ENCODE measurements at regions of chr2 and their contacts with region 1.

Region 1: DNA sequence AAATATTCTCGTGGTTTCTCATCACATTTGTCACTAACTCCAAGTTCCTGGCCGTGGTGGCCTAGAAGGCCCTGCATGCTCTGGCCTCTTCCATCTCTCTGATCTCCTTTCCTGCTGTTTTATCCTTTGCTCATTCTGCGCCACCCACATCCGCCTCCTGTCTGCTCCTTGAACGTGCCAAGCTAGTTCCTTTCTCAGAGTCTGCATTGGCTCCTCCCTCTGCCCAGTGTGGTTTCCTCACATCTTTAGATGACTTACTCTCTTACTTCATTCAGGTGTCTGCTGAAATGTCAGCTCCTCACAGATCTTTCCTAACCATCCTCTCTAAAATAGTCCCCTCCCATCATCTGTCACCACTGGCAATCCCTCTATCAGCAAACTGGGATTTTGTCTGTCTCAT is 158.6 kb upstream of the RBMS1 start:
- DNase-seq: peak; percentile 87
- H3K4me3 Mint-ChIP-seq: no peak overlapping the region
- H3K27ac Mint-ChIP-seq: peak overlapping the region; percentile 17
- H3K4me1 Mint-ChIP-seq: peaks cover 30% of the 10 kb centered on the region
- H3K27me3 Mint-ChIP-seq: no peaks in the 10 kb centered on the region

Region 2: GRCh38 chr2:160332318-160332717 is 319.9 kb before region 1 on chr2:
- CTCF ChIA-PET with region 1: no interaction called
- intact Hi-C with region 1: loop called (anchors 5 kb)
- DNase-seq: peak; percentile 50
- H3K4me3 Mint-ChIP-seq: no peak overlapping the region
- H3K27ac Mint-ChIP-seq: peak overlapping the region; percentile 38
- H3K4me1 Mint-ChIP-seq: peaks cover 81% of the 10 kb centered on the region
- H3K27me3 Mint-ChIP-seq: no peaks in the 10 kb centered on the region

Region 3: GRCh38 chr2:160566717-160567116 is 85.5 kb before region 1 on chr2:
- CTCF ChIA-PET with region 1: no interaction called
- intact Hi-C with region 1: no loop called
- DNase-seq: no peak
- H3K4me3 Mint-ChIP-seq: no peak overlapping the region
- H3K27ac Mint-ChIP-seq: no peak overlapping the region
- H3K4me1 Mint-ChIP-seq: peaks cover 14% of the 10 kb centered on the region
- H3K27me3 Mint-ChIP-seq: no peaks in the 10 kb centered on the region

Region 4: DNA sequence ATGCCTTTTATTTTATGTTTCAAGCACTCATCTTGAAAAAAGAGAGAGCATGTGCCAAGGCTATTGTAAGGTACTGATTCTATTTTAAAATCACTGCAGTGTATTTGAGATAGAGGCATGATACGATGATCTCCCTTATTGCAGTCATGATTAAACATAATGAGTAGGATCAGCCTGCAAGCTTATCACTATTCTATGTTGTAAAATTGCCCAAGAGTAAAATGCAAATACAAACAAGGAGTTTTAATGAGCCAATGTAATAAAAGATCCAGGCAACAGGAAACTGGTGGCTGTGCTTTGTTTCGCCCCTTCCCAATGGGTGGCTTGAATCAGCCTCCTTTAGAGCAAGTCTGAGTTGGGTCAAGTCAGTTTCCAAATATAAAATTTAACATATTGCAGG is 42.2 kb before region 1 on chr2:
- CTCF ChIA-PET with region 1: interaction called, 3 read pairs
- intact Hi-C with region 1: loop called (anchors 2 kb)
- DNase-seq: no peak
- H3K4me3 Mint-ChIP-seq: no peak overlapping the region
- H3K27ac Mint-ChIP-seq: no peak overlapping the region
- H3K4me1 Mint-ChIP-seq: peaks cover 41% of the 10 kb centered on the region
- H3K27me3 Mint-ChIP-seq: no peaks in the 10 kb centered on the region

Region 5: GRCh38 chr2:160639472-160639871 is 12.8 kb before region 1 on chr2:
- CTCF ChIA-PET with region 1: no interaction called
- intact Hi-C with region 1: no loop called
- DNase-seq: no peak
- H3K4me3 Mint-ChIP-seq: no peak overlapping the region
- H3K27ac Mint-ChIP-seq: no peak overlapping the region
- H3K4me1 Mint-ChIP-seq: no peaks in the 10 kb centered on the region
- H3K27me3 Mint-ChIP-seq: no peaks in the 10 kb centered on the region

Region 6: DNA sequence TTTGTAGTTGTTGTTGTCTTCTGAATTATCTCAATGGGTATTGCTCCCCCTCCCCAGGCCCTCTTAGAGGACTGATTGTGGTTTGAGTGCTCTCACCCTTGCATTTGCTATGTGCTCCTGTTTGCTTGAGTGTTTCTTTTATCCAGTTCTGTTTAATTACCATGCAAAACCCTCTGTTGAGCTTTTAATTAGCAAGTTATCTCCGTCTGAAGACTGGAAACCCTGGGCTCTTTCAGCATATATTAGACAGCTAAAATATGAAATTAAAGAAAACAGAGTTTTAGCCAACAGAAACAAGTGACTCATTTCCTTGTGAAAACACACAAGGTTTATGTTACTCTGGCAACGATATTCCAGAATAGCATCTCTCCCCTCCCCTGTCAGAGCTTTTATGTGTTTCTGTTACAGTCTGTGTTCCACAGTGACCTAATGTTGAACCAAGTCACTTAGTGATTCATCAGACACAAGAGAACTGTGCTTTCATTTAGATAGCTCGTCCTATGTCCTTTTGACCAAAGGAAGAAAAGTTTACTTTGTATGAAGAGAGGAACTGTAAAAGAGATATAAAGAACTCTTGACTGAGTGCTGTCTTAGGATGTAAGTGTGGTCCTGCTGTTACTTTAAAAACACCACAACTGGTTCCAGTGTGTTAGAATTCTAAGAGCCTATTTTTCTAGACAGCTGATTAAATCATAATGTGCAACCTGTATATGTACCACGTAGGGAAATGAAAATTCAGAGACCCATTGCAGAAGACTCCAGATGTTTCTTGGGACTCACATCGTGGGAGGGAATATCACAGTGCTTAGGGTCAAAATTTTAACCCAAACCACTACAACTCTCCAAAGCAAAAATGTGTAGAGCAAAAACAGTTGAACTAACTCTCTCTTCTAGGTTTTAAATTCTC is 14.2 kb after region 1 on chr2:
- CTCF ChIA-PET with region 1: interaction called, 3 read pairs
- intact Hi-C with region 1: loop called (anchors 1 kb)
- DNase-seq: no peak
- H3K4me3 Mint-ChIP-seq: no peak overlapping the region
- H3K27ac Mint-ChIP-seq: no peak overlapping the region
- H3K4me1 Mint-ChIP-seq: peaks cover 19% of the 10 kb centered on the region
- H3K27me3 Mint-ChIP-seq: no peaks in the 10 kb centered on the region

Region 7: GRCh38 chr2:160703648-160704585 is 51.7 kb after region 1 on chr2:
- CTCF ChIA-PET with region 1: no interaction called
- intact Hi-C with region 1: no loop called
- DNase-seq: peak; percentile 60
- H3K4me3 Mint-ChIP-seq: peak overlapping the region; percentile 19
- H3K27ac Mint-ChIP-seq: no peak overlapping the region
- H3K4me1 Mint-ChIP-seq: peaks cover 12% of the 10 kb centered on the region
- H3K27me3 Mint-ChIP-seq: no peaks in the 10 kb centered on the region

Measured in activated naive CD4-positive, alpha-beta T cell treated with anti-CD3 and anti-CD28 coated beads for 36 hours (primary cell).